Ascending aorta (tissue), 2 donors: ENCODE measurements at regions of chr1 and their contacts with region 1.

Region 1: DNA sequence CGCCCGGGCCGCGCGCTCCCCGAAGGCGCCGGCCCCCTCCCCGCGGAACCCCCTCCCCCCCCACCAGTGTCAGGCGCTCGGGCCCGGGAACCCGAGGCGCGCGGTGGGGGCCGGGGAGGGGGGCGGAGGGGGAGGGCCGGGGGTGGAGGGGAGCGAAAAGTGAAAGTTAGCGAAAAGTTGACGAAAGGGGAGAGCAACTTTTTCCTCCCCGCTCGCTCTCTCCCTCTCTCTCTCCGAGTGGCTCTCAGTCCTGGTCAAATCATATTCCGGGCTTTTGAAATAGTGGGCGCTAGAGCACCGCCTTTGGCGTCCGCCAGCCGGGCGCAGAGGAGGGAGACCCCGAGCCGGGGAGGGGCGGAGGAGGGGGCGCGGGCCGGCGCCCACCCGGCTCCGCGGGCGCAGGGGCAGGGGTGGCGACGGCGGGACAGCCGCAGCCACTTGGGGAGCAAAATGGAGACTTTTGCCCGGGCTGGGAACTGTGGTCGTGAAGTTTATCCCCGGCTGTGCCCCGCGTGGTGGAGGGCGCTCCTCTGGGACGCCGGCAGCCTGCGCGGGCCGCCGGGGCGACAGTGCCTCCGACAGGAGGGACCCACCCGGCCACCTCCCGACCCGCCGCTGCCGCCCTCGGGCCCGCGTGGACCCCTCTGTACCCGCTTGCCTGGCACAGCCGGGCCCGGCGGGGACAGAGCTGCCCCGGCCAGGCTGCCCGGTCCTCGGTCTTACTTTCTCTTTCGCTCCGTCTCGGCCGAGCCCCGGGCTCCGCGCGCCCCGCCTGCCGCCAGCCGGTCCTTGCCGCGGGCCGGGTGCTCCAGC is 694 bp downstream of the PRDM16 start:
- DNase-seq: peak; percentile 8 to 82
- H3K4me3 ChIP-seq: peak overlapping the region; percentile 95 to 97
- H3K27ac ChIP-seq: peak overlapping the region; percentile 99 to 100
- H3K4me1 ChIP-seq: peaks cover 6 to 32% of the 10 kb centered on the region in 2 donors
- H3K27me3 ChIP-seq: no peaks in the 10 kb centered on the region
- CTCF ChIP-seq: peak in 1 of 3 experiments; percentile 49

Region 2: GRCh38 chr1:3126756-3127597 is 57.3 kb after region 1 on chr1:
- intact Hi-C with region 1: loop called (anchors 2 kb)
- DNase-seq: no peak
- H3K4me3 ChIP-seq: peak overlapping the region; percentile 30 to 32
- H3K27ac ChIP-seq: peak overlapping the region; percentile 86 to 91
- H3K4me1 ChIP-seq: peaks cover 49 to 96% of the 10 kb centered on the region in 2 donors
- H3K27me3 ChIP-seq: no peaks in the 10 kb centered on the region
- CTCF ChIP-seq: no peak

Region 3: GRCh38 chr1:3186513-3186921 is 116.8 kb after region 1 on chr1:
- intact Hi-C with region 1: loop called (anchors 2 kb)
- DNase-seq: peak; percentile 93 to 98
- H3K4me3 ChIP-seq: peak overlapping the region in 1 of 2 donors; percentile 41
- H3K27ac ChIP-seq: peak overlapping the region; percentile 99
- H3K4me1 ChIP-seq: peaks cover 24 to 72% of the 10 kb centered on the region in 2 donors
- H3K27me3 ChIP-seq: no peaks in the 10 kb centered on the region
- CTCF ChIP-seq: no peak

Region 4: GRCh38 chr1:3283849-3284248 is 214.2 kb after region 1 on chr1:
- intact Hi-C with region 1: loop called (anchors 2 kb)
- DNase-seq: no peak
- H3K4me3 ChIP-seq: peak overlapping the region in 1 of 2 donors; percentile 37
- H3K27ac ChIP-seq: peak overlapping the region; percentile 27 to 56
- H3K4me1 ChIP-seq: peaks cover 9 to 39% of the 10 kb centered on the region in 2 donors
- H3K27me3 ChIP-seq: no peaks in the 10 kb centered on the region
- CTCF ChIP-seq: peak; percentile 81 to 89 (median 88)

Region 5: GRCh38 chr1:3319874-3320245 is 250.2 kb after region 1 on chr1:
- intact Hi-C with region 1: no loop called
- DNase-seq: no peak
- H3K4me3 ChIP-seq: no peak overlapping the region
- H3K27ac ChIP-seq: peak overlapping the region; percentile 15 to 51
- H3K4me1 ChIP-seq: peaks cover 10 to 63% of the 10 kb centered on the region in 2 donors
- H3K27me3 ChIP-seq: no peaks in the 10 kb centered on the region
- CTCF ChIP-seq: peak; percentile 57 to 75 (median 74)

Region 6: DNA sequence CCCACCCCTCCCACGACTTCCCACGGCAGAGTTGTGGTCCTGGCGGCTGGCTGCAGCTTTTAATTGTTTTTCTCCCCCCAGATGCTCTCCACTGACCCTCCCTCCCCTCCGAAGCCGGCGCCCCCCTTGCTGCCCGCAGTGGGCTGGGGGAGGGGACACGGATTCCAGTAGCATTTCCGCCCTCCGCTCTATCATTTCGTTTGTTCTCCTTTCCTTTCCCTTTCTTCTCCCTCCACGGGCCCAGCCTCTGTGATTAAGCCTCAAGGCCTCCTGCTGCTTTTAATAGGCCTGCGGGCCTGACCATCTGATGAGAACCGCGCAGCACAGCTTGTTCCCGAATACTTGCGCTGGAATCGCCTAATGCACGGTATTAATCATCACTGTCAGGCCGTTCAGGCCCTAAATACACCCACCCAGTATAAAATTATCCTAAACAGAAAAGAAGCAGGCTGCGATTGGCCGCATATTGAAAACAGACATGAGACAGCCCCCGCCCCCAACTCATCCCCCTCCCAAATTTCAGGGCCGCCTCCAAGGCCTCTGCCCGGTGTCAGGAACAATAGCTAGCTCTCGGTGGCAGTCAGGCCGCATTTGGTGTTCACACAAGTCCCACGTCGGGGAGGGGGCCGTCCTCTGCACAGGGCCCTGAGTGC is 282.7 kb after region 1 on chr1:
- intact Hi-C with region 1: loop called (anchors 2 kb)
- DNase-seq: peak; percentile 71 to 95
- H3K4me3 ChIP-seq: peak overlapping the region; percentile 36 to 40
- H3K27ac ChIP-seq: peak overlapping the region; percentile 89 to 98
- H3K4me1 ChIP-seq: peaks cover 70 to 95% of the 10 kb centered on the region in 2 donors
- H3K27me3 ChIP-seq: no peaks in the 10 kb centered on the region
- CTCF ChIP-seq: no peak

Region 7: GRCh38 chr1:3399732-3400131 is 330.0 kb after region 1 on chr1:
- intact Hi-C with region 1: loop called (anchors 2 kb)
- DNase-seq: peak in 1 of 2 donors; percentile 77
- H3K4me3 ChIP-seq: no peak overlapping the region
- H3K27ac ChIP-seq: peak overlapping the region; percentile 97 to 99
- H3K4me1 ChIP-seq: peaks cover 28 to 73% of the 10 kb centered on the region in 2 donors
- H3K27me3 ChIP-seq: no peaks in the 10 kb centered on the region
- CTCF ChIP-seq: no peak

Region 8: DNA sequence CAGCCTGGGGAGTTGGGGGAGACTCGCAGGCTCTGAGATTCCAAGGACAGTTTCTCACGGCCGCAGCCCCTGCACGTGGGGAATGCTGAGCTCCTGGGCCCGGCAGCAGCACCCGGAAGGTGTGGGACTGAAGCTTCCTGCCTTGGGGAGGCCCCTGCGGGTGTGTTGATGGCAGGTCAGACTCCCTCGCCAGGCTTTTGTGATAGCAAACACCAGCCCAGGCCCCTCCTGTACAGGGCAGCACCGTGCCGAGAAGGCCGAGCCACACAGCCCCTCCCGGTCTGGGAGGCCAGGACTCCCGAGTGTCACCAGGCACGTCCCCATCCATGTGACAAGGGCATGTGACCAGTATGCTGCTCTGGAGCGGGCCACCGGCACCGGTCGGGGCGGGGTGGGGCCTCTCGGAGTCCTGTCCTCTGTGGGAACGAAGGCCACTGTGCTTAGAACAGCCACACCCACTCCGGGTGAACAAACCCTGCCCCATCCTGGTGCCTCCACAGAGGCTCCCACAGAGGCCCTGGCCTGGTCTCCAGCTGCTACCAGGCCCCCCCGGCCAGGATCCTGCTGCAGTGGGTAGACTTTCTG is 353.6 kb after region 1 on chr1:
- intact Hi-C with region 1: loop called (anchors 2 kb)
- DNase-seq: peak; percentile 77 to 87
- H3K4me3 ChIP-seq: no peak overlapping the region
- H3K27ac ChIP-seq: peak overlapping the region; percentile 77 to 92
- H3K4me1 ChIP-seq: peaks cover 6 to 43% of the 10 kb centered on the region in 2 donors
- H3K27me3 ChIP-seq: no peaks in the 10 kb centered on the region
- CTCF ChIP-seq: no peak